ENCODE measurements at regions of chr17 and their contacts with region 1.

Region 1: GRCh38 chr17:76714822-76715495 is 4.2 kb upstream of the MXRA7 start:
- DNase-seq: peak; percentile 87
- H3K4me3 Mint-ChIP-seq: no peak overlapping the region
- H3K27ac Mint-ChIP-seq: peak overlapping the region; percentile 86
- H3K4me1 Mint-ChIP-seq: peaks cover 49% of the 10 kb centered on the region
- H3K27me3 Mint-ChIP-seq: peaks cover 8% of the 10 kb centered on the region

Region 2: GRCh38 chr17:76523084-76524037 is 191.6 kb before region 1 on chr17:
- CTCF ChIA-PET with region 1: interaction called, 10 read pairs
- DNase-seq: peak; percentile 86
- H3K4me3 Mint-ChIP-seq: no peak overlapping the region
- H3K27ac Mint-ChIP-seq: no peak overlapping the region
- H3K4me1 Mint-ChIP-seq: peaks cover 27% of the 10 kb centered on the region
- H3K27me3 Mint-ChIP-seq: peaks cover 63% of the 10 kb centered on the region

Region 3: GRCh38 chr17:76640546-76641380 is 74.2 kb before region 1 on chr17:
- CTCF ChIA-PET with region 1: no interaction called
- DNase-seq: no peak
- H3K4me3 Mint-ChIP-seq: no peak overlapping the region
- H3K27ac Mint-ChIP-seq: peak overlapping the region; percentile 42
- H3K4me1 Mint-ChIP-seq: peaks cover 39% of the 10 kb centered on the region
- H3K27me3 Mint-ChIP-seq: peaks cover 19% of the 10 kb centered on the region

Region 4: GRCh38 chr17:76695059-76695831 is 19.7 kb before region 1 on chr17:
- CTCF ChIA-PET with region 1: no interaction called
- DNase-seq: no peak
- H3K4me3 Mint-ChIP-seq: no peak overlapping the region
- H3K27ac Mint-ChIP-seq: no peak overlapping the region
- H3K4me1 Mint-ChIP-seq: peaks cover 26% of the 10 kb centered on the region
- H3K27me3 Mint-ChIP-seq: peaks cover 39% of the 10 kb centered on the region

Region 5: GRCh38 chr17:76726231-76726775 is 11.3 kb after region 1 on chr17 and contains the start of gene JMJD6:
- CTCF ChIA-PET with region 1: interaction called, 30 read pairs
- DNase-seq: peak; percentile 97
- H3K4me3 Mint-ChIP-seq: peak within 1 kb of the TSS; percentile 96
- H3K27ac Mint-ChIP-seq: peak within 1 kb of the TSS; percentile 99
- H3K4me1 Mint-ChIP-seq: peaks cover 74% of the 10 kb centered on the region
- H3K27me3 Mint-ChIP-seq: no peaks in the 10 kb centered on the region